ENCODE measurements at regions of chr17 and their contacts with region 1.

Region 1: GRCh38 chr17:11302401-11303106 is 61.5 kb downstream of the SHISA6 start:
- DNase-seq: no peak
- ATAC-seq: no peak
- H3K4me3 ChIP-seq: no peak overlapping the region
- H3K27ac ChIP-seq: no peak overlapping the region
- H3K4me1 ChIP-seq: no peaks in the 10 kb centered on the region
- H3K27me3 ChIP-seq: no peaks in the 10 kb centered on the region
- CTCF ChIP-seq: no peak
- EP300 ChIP-seq: no peak
- POLR2A ChIP-seq: no peak
- RAD21 ChIP-seq: no peak

Region 2: DNA sequence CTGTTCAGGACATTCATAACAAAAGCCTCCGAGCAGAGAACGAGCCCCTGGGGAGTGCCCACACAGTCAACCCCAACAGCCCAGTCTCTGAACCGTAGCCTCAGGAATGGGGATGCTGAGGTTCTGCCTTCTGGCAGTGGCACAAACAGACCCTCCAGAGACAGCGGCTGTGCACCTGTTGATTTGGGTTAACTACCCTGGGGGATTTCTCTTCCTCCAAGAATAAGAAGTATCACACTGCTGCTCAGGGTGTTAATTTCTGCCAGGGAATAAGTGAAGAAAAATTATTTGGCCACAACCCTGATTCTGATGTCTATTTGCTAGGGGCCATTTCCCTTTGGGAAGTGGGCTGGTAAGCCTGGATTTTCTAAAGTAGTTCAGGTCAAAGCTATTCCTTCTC is 413.7 kb before region 1 on chr17:
- CTCF ChIA-PET with region 1: no interaction called
- POLR2A ChIA-PET with region 1: no interaction called
- RAD21 ChIA-PET with region 1: no interaction called
- SMC1A ChIA-PET with region 1: no interaction called
- in situ Hi-C with region 1: loop called (anchors 10 kb)
- intact Hi-C with region 1: no loop called
- DNase-seq: no peak
- ATAC-seq: no peak
- H3K4me3 ChIP-seq: no peak overlapping the region
- H3K27ac ChIP-seq: no peak overlapping the region
- H3K4me1 ChIP-seq: no peaks in the 10 kb centered on the region
- H3K27me3 ChIP-seq: no peaks in the 10 kb centered on the region; a peak in 1 of 4 replicates
- CTCF ChIP-seq: no peak
- EP300 ChIP-seq: no peak
- POLR2A ChIP-seq: no peak
- RAD21 ChIP-seq: no peak

Region 3: DNA sequence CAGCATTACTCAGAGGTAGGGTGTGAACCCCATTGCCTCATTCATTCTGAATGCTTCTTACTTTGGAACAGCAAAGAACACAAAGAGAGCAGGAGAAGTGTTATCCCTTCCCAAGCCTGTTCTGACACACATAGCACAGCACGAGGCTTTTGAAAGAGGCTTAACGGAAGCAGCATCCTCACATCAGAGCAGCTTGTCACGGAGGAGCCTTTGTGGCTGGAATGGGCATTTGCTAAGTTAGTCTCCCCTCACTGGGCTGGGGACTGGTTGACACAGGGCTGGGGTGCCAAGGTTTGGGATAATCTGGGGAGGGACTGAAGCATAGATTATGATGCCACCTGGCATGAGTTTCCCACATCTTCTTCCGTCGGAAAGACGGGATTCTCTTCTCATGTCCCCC is 128.2 kb after region 1 on chr17:
- CTCF ChIA-PET with region 1: no interaction called
- POLR2A ChIA-PET with region 1: no interaction called
- RAD21 ChIA-PET with region 1: no interaction called
- SMC1A ChIA-PET with region 1: no interaction called
- in situ Hi-C with region 1: no loop called
- intact Hi-C with region 1: no loop called
- DNase-seq: no peak
- ATAC-seq: no peak
- H3K4me3 ChIP-seq: no peak overlapping the region
- H3K27ac ChIP-seq: no peak overlapping the region
- H3K4me1 ChIP-seq: no peaks in the 10 kb centered on the region
- H3K27me3 ChIP-seq: no peaks in the 10 kb centered on the region
- CTCF ChIP-seq: no peak
- EP300 ChIP-seq: no peak
- POLR2A ChIP-seq: no peak
- RAD21 ChIP-seq: no peak

Region 4: GRCh38 chr17:12164085-12164484 is 861.5 kb after region 1 on chr17:
- CTCF ChIA-PET with region 1: no interaction called
- POLR2A ChIA-PET with region 1: no interaction called
- RAD21 ChIA-PET with region 1: no interaction called
- SMC1A ChIA-PET with region 1: no interaction called
- in situ Hi-C with region 1: loop called (anchors 25 kb)
- intact Hi-C with region 1: no loop called
- DNase-seq: no peak
- ATAC-seq: no peak
- H3K4me3 ChIP-seq: no peak overlapping the region
- H3K27ac ChIP-seq: no peak overlapping the region
- H3K4me1 ChIP-seq: no peaks in the 10 kb centered on the region
- H3K27me3 ChIP-seq: no peaks in the 10 kb centered on the region
- CTCF ChIP-seq: no peak
- EP300 ChIP-seq: no peak
- POLR2A ChIP-seq: no peak
- RAD21 ChIP-seq: no peak

Measured in GM12878 (cell line).